Calu3 (cell line): ENCODE measurements at regions of chr16 and their contacts with region 1.

Region 1: GRCh38 chr16:30005341-30006094 is 5.3 kb downstream of the DOC2A start:
- DNase-seq: peak; percentile 69
- H3K4me3 Mint-ChIP-seq: no peak overlapping the region
- H3K27ac Mint-ChIP-seq: no peak overlapping the region
- H3K4me1 Mint-ChIP-seq: peaks cover 6% of the 10 kb centered on the region
- H3K27me3 Mint-ChIP-seq: peaks cover 8% of the 10 kb centered on the region
- CTCF ChIP-seq: peak; percentile 87

Region 2: GRCh38 chr16:29862884-29863668 is 142.4 kb before region 1 on chr16 and contains the start of gene CDIPT:
- CTCF ChIA-PET with region 1: no interaction called
- intact Hi-C with region 1: loop called (anchors 5 kb)
- DNase-seq: peak; percentile 95
- H3K4me3 Mint-ChIP-seq: peak within 1 kb of the TSS; percentile 89
- H3K27ac Mint-ChIP-seq: peak within 1 kb of the TSS; percentile 99
- H3K4me1 Mint-ChIP-seq: peaks cover 7% of the 10 kb centered on the region
- H3K27me3 Mint-ChIP-seq: peaks cover 9% of the 10 kb centered on the region
- CTCF ChIP-seq: peak; percentile 23
- total RNA-seq, gene CDIPT: 62.7 and 64.1 TPM in 2 replicates

Region 3: DNA sequence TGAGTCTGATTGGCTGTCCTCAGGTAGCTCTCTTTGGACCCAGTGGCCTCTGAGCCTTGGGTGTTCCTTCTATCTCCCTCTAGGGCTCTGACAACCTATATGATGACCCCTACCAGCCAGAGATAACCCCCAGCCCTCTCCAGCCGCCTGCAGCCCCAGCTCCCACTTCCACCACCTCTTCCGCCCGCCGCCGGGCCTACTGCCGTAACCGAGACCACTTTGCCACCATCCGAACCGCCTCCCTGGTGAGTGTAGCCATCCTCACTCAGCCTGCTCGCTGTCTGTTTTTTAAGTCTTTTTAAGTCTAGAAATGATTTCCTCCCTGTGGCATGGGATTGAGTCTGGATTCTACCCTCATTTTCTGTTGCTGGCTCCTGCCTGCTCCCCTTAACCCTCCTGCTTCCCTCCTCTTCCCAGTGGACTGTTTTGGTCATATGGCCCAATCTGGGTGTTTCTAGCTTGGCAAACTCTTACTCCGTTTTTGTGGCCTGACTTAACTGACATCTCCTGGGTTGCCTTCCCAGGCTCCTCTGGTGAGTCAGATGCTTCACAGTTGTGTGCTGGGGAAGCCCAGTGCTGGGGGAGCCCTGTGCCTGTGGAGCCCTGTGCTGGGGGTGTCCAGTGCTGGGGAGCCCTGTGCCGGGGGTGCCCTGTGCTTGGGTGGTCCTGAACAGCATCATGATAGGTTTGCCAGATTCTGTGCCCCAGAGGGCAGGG is 21.9 kb before region 1 on chr16:
- CTCF ChIA-PET with region 1: interaction called, 12 read pairs
- intact Hi-C with region 1: no loop called
- DNase-seq: no peak
- H3K4me3 Mint-ChIP-seq: no peak overlapping the region
- H3K27ac Mint-ChIP-seq: no peak overlapping the region
- H3K4me1 Mint-ChIP-seq: no peaks in the 10 kb centered on the region
- H3K27me3 Mint-ChIP-seq: no peaks in the 10 kb centered on the region
- CTCF ChIP-seq: no peak